ENCODE measurements at regions of chr15 and their contacts with region 1.

Region 1: DNA sequence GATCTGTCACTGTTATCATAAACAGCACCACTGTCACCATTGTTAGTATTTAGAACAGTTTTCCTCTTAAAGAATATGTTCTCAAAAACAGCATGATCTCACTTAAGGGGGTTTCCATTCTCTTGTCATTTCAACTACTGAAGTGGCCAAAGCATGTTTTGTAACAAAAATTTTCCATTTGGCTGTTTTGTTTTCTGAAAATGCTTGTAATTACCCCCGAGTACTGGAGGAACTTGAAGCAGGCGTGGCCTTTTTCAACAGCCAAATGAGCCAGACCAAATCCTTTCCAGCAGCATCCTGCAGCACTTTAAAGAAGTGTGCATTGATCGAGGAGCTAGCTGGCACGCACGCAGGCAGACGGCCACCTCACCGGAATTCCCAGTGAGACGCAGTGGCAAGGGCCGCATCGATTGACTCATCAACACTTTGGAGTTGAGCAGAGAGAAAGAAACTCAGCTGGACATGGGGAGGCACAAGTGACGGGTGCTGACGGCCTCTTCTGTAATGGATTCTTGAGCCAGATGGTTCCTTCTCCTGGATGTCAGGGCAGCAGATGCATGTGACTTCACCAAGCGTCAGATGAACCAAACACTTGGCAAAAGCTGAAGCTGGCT is 234.3 kb upstream of the IGF1R start:
- DNase-seq: peak in 1 of 2 donors; percentile 37
- ATAC-seq: peak in 4 of 8 donors; percentile 28 to 64 (median 40)
- H3K4me3 ChIP-seq: no peak overlapping the region
- H3K27ac ChIP-seq: peak overlapping the region in 2 of 10 donors; percentile 10 to 73
- H3K4me1 ChIP-seq: no peaks in the 10 kb centered on the region
- H3K27me3 ChIP-seq: peaks cover 0 to 12% (median 6%) of the 10 kb centered on the region in 7 donors
- CTCF ChIP-seq: no peak

Region 2: GRCh38 chr15:97893967-97894366 is 520.1 kb before region 1 on chr15:
- intact Hi-C with region 1: loop called in 1 of 10 experiments (anchors 10 kb)
- DNase-seq: no peak
- ATAC-seq: no peak
- H3K4me3 ChIP-seq: no peak overlapping the region
- H3K27ac ChIP-seq: no peak overlapping the region
- H3K4me1 ChIP-seq: peaks cover 0 to 8% (median 3%) of the 10 kb centered on the region in 9 donors
- H3K27me3 ChIP-seq: peaks cover 0 to 3% (median 0%) of the 10 kb centered on the region in 7 donors
- CTCF ChIP-seq: no peak

Measured in heart right ventricle (tissue), 16 donors.